CD4-positive, alpha-beta memory T cell (primary cell): ENCODE measurements at regions of chr2 and their contacts with region 1.

Region 1: GRCh38 chr2:223797811-223798721 is 39.3 kb downstream of the AP1S3 start:
- DNase-seq: no peak
- H3K4me3 ChIP-seq: no peak overlapping the region
- H3K4me3 Mint-ChIP-seq: no peak overlapping the region
- H3K27ac ChIP-seq: no peak overlapping the region
- H3K27ac Mint-ChIP-seq: no peak overlapping the region
- H3K4me1 ChIP-seq: no peaks in the 10 kb centered on the region
- H3K4me1 Mint-ChIP-seq: peaks cover 4 to 6% (median 5%) of the 10 kb centered on the region in 4 donors
- H3K27me3 ChIP-seq: no peaks in the 10 kb centered on the region
- H3K27me3 Mint-ChIP-seq: no peaks in the 10 kb centered on the region

Region 2: GRCh38 chr2:223727562-223727961 is 70.5 kb before region 1 on chr2:
- CTCF ChIA-PET with region 1: interaction called, 13 read pairs
- POLR2A ChIA-PET with region 1: no interaction called
- intact Hi-C with region 1: no loop called
- DNase-seq: peak in 4 of 5 donors; percentile 21 to 25 (median 24)
- H3K4me3 ChIP-seq: no peak overlapping the region
- H3K4me3 Mint-ChIP-seq: no peak overlapping the region
- H3K27ac ChIP-seq: no peak overlapping the region
- H3K27ac Mint-ChIP-seq: no peak overlapping the region
- H3K4me1 ChIP-seq: no peaks in the 10 kb centered on the region
- H3K4me1 Mint-ChIP-seq: no peaks in the 10 kb centered on the region
- H3K27me3 ChIP-seq: no peaks in the 10 kb centered on the region
- H3K27me3 Mint-ChIP-seq: peaks cover 3 to 4% of the 10 kb centered on the region in 2 donors

Region 3: DNA sequence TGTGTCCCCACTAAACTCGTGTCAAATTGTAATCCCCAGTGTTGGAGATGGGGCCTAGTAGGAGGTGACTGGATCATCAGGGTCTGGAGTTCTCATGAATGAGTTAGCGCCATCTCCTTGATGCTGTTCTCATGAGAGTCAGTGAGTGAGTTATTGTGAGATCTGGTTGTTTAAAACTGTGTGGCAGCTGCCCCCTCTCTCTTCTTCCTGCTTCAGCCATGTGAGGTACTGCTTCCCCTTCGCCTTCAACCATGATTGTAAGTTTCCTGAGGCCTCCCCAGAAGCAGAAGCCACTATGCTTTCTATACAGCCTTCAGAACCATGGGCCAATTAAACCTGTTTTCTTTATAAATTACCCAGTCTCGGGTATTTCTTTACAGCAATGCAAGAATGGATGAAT is 11.1 kb before region 1 on chr2:
- CTCF ChIA-PET with region 1: no interaction called
- POLR2A ChIA-PET with region 1: no interaction called
- intact Hi-C with region 1: no loop called
- DNase-seq: no peak
- H3K4me3 ChIP-seq: no peak overlapping the region
- H3K4me3 Mint-ChIP-seq: no peak overlapping the region
- H3K27ac ChIP-seq: no peak overlapping the region
- H3K27ac Mint-ChIP-seq: no peak overlapping the region
- H3K4me1 ChIP-seq: no peaks in the 10 kb centered on the region
- H3K4me1 Mint-ChIP-seq: peaks cover 0 to 1% (median 0%) of the 10 kb centered on the region in 4 donors
- H3K27me3 ChIP-seq: no peaks in the 10 kb centered on the region
- H3K27me3 Mint-ChIP-seq: no peaks in the 10 kb centered on the region